Vagina (tissue), 2 donors: ENCODE measurements at regions of chr7 and their contacts with region 1.

Region 1: GRCh38 chr7:93062599-93062998 is 55.2 kb downstream of the SAMD9 start:
- DNase-seq: no peak
- H3K4me3 ChIP-seq: no peak overlapping the region
- H3K27ac ChIP-seq: no peak overlapping the region
- H3K4me1 ChIP-seq: no peaks in the 10 kb centered on the region
- H3K27me3 ChIP-seq: no peaks in the 10 kb centered on the region
- CTCF ChIP-seq: no peak
- POLR2A ChIP-seq: no peak

Region 2: GRCh38 chr7:93298671-93299070 is 236.1 kb after region 1 on chr7:
- intact Hi-C with region 1: no loop called
- DNase-seq: no peak
- H3K4me3 ChIP-seq: no peak overlapping the region
- H3K27ac ChIP-seq: no peak overlapping the region
- H3K4me1 ChIP-seq: no peaks in the 10 kb centered on the region
- H3K27me3 ChIP-seq: no peaks in the 10 kb centered on the region
- CTCF ChIP-seq: no peak
- POLR2A ChIP-seq: no peak

Region 3: GRCh38 chr7:93558705-93559614 is 496.4 kb after region 1 on chr7:
- intact Hi-C with region 1: no loop called
- DNase-seq: no peak
- H3K4me3 ChIP-seq: no peak overlapping the region
- H3K27ac ChIP-seq: no peak overlapping the region
- H3K4me1 ChIP-seq: no peaks in the 10 kb centered on the region
- H3K27me3 ChIP-seq: no peaks in the 10 kb centered on the region
- CTCF ChIP-seq: no peak
- POLR2A ChIP-seq: no peak

Region 4: DNA sequence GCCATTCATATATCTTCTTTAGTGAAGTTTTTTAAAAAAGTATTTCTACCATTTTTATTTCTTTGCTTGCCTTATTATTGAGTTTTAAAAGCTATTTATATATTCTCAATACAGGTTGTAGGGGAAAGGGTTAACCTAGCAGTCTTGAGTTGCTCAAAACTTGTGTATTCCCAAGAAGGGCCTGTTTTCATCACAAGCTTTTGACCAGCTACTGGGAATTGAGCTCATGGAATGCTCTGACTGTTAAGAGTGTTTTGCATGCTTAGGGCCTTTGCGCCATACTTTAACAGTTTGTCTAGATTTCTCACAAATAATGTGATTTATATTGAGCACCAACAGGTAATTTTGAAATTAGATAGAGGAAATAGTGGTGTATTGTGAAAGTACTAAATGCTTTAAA is 583.9 kb after region 1 on chr7:
- intact Hi-C with region 1: loop called (anchors 5 kb)
- DNase-seq: no peak
- H3K4me3 ChIP-seq: no peak overlapping the region
- H3K27ac ChIP-seq: no peak overlapping the region
- H3K4me1 ChIP-seq: no peaks in the 10 kb centered on the region
- H3K27me3 ChIP-seq: no peaks in the 10 kb centered on the region
- CTCF ChIP-seq: no peak
- POLR2A ChIP-seq: no peak